Panc1 (cell line): ENCODE measurements at regions of chr9 and their contacts with region 1.

Region 1: DNA sequence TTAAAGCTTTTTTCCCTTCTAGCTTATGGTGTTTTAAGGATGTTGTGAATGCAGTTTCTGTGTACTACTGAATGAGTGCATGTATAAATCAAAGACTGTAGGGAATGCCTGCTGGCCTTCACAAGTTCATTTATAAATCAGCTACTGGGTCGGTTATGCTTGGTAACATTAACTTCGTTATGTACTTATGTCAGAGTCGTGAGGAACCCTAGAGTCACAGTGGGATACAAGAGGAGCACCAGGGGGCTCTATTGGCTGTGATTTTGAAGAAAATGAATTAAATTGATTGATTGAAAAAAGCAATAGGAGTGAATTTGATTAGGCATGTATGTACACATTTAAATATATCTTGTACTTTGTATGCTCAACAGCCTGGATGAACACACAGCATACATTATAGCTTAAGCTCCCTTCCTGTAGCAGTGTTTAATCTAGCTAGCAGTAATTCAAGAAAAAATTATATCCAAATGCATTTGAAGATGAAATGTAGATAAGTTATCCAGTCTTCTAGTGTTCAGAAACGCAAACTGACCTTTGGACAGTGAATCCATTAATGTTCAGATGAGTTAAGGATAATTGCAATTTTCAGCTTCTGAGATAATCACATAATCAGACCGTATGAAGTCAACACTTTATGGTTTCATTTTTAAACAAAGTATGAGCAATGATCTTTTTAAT is 204.2 kb downstream of the KDM4C start:
- DNase-seq: no peak
- ATAC-seq: no peak
- H3K4me3 ChIP-seq: no peak overlapping the region
- H3K27ac ChIP-seq: no peak overlapping the region
- H3K4me1 ChIP-seq: no peaks in the 10 kb centered on the region
- H3K27me3 ChIP-seq: no peaks in the 10 kb centered on the region
- CTCF ChIP-seq: no peak

Region 2: DNA sequence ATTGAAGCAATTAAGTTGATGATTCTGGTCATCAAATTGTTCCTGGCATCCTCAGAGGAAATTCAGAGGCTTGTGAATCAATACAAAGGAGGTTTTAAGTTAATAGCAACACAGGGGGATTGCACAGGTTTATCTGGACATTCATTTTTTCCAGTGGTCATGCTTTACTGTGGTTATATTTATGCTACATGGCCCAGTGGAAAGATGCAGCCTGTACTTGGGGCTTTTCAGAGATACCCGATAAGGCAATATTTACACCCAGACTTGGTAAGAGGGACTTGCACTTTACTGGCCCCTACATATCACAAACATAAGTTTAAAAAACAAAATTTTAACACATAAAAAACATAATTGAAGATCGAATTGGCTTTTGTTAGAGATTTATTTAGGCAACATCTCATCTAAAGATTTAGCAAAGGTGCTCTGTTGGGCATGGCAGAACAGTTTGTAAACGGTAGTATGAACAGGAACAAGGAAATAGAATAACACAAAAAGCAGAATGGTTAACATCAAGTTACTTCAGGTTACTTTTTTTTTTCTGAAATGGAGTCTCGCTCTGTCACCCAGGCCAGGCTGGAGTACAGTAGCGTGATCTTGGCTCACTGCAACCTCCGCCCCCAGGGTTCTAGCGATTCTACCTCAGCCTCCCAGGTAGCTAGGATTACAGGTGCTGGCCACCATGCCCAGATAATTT is 266.7 kb before region 1 on chr9:
- CTCF ChIA-PET with region 1: no interaction called
- POLR2A ChIA-PET with region 1: no interaction called
- in situ Hi-C with region 1: no loop called
- intact Hi-C with region 1: no loop called
- DNase-seq: no peak
- ATAC-seq: no peak
- H3K4me3 ChIP-seq: no peak overlapping the region
- H3K27ac ChIP-seq: no peak overlapping the region
- H3K4me1 ChIP-seq: no peaks in the 10 kb centered on the region
- H3K27me3 ChIP-seq: no peaks in the 10 kb centered on the region
- CTCF ChIP-seq: no peak

Region 3: GRCh38 chr9:6739218-6739617 is 222.8 kb before region 1 on chr9:
- CTCF ChIA-PET with region 1: no interaction called
- POLR2A ChIA-PET with region 1: interaction called, 10 read pairs
- in situ Hi-C with region 1: no loop called
- intact Hi-C with region 1: no loop called
- DNase-seq: no peak
- ATAC-seq: no peak
- H3K4me3 ChIP-seq: no peak overlapping the region
- H3K27ac ChIP-seq: no peak overlapping the region
- H3K4me1 ChIP-seq: no peaks in the 10 kb centered on the region
- H3K27me3 ChIP-seq: no peaks in the 10 kb centered on the region
- CTCF ChIP-seq: peak; percentile 33; the same call in 1 of the 2 replicates

Region 4: GRCh38 chr9:6757132-6757455 is 204.9 kb before region 1 on chr9:
- CTCF ChIA-PET with region 1: no interaction called
- POLR2A ChIA-PET with region 1: no interaction called
- in situ Hi-C with region 1: no loop called
- intact Hi-C with region 1: no loop called
- DNase-seq: peak; percentile 69
- ATAC-seq: peak; percentile 76
- H3K4me3 ChIP-seq: peak overlapping the region; percentile 59 to 64
- H3K27ac ChIP-seq: peak overlapping the region; percentile 68
- H3K4me1 ChIP-seq: no peaks in the 10 kb centered on the region
- H3K27me3 ChIP-seq: no peaks in the 10 kb centered on the region
- CTCF ChIP-seq: no peak